ENCODE measurements at regions of chr6 and their contacts with region 1.

Region 1: GRCh38 chr6:33958526-33959333 is 154.9 kb upstream of the MLN start:
- H3K4me3 ChIP-seq: no peak overlapping the region
- H3K27ac ChIP-seq: no peak overlapping the region
- H3K4me1 ChIP-seq: no peaks in the 10 kb centered on the region; the same call in 1 of the 2 replicates
- CTCF ChIP-seq: peak; percentile 56; the same call in 1 of the 2 replicates

Region 2: DNA sequence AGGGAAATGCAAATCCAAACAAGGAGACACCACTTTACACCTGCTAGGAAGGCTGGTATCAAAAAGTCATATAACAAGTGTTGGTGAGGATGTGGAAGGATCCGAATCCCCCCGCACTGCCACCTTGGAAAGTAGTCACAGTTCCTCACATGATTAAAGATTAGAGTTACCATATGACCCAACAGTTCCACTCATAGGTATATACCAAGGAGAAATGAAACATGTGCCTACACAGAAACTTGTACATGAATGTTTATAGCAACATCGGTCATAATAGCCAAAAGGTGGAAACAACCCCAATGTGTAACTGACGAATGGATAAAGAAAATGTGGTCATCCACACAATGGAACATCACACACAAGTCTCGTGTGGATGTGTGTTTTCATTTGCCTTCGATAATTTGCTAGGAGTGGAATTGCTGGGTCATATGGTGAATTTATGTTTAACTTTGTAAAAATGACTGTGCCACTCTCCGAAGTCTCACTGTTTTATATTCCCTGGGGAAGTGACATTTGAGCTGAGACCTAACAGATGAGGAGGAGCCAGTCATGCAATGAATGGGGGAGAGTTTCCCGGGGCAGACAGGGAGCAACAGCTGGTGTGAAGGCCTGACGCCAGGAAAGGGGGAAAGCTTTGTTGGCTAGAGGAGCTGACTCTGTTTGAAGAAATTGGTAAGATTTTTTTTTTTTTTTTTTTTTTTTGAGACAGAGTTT is 29.0 kb before region 1 on chr6:
- CTCF ChIA-PET with region 1: no interaction called
- POLR2A ChIA-PET with region 1: no interaction called
- H3K4me3 ChIP-seq: no peak overlapping the region
- H3K27ac ChIP-seq: no peak overlapping the region
- H3K4me1 ChIP-seq: no peaks in the 10 kb centered on the region
- CTCF ChIP-seq: no peak

Region 3: GRCh38 chr6:33977606-33978411 is 19.1 kb after region 1 on chr6:
- CTCF ChIA-PET with region 1: interaction called, 11 read pairs
- POLR2A ChIA-PET with region 1: no interaction called
- H3K4me3 ChIP-seq: no peak overlapping the region
- H3K27ac ChIP-seq: no peak overlapping the region
- H3K4me1 ChIP-seq: no peaks in the 10 kb centered on the region
- CTCF ChIP-seq: no peak

Region 4: DNA sequence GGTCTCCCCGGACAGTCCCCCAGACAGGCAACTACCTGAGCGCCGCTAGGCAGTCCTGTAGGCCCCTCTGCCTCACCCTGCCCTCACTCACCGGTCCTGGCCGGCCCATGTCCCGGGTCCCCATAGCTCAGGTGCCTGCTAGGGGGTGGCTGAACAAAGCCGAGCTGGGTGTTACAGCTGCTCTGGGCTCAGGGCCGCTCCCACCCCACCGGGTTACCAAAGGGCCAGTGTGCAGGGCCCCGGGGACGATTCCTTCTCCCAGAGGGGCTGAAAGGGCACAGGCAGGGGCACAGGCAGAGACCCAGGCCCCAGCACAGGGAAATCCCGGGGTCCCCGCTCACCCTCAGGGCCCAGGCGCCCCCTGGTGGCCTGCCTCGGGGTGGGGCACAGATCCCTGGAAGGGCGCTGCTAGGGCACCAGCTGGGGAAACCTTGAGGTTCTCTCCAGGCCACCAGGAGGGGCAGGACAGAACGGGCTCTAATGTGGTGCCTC is 68.8 kb after region 1 on chr6:
- CTCF ChIA-PET with region 1: interaction called, 24 read pairs
- POLR2A ChIA-PET with region 1: no interaction called
- H3K4me3 ChIP-seq: no peak overlapping the region
- H3K27ac ChIP-seq: no peak overlapping the region
- H3K4me1 ChIP-seq: no peaks in the 10 kb centered on the region
- CTCF ChIP-seq: peak; percentile 54

Region 5: GRCh38 chr6:34106900-34107573 is 148.3 kb after region 1 on chr6:
- CTCF ChIA-PET with region 1: no interaction called
- POLR2A ChIA-PET with region 1: no interaction called
- H3K4me3 ChIP-seq: no peak overlapping the region
- H3K27ac ChIP-seq: no peak overlapping the region
- H3K4me1 ChIP-seq: no peaks in the 10 kb centered on the region
- CTCF ChIP-seq: no peak

Measured in HEK293 (cell line).